Endothelial cell of umbilical vein (primary cell): ENCODE measurements at regions of chr17 and their contacts with region 1.

Region 1: GRCh38 chr17:34980681-34981537 is 597 bp downstream of the LIG3 start:
- DNase-seq: peak; percentile 80
- H3K4me3 ChIP-seq: peak overlapping the region; percentile 65 to 92 (median 89)
- H3K27ac ChIP-seq: peak overlapping the region; percentile 96
- H3K4me1 ChIP-seq: peaks cover 19% of the 10 kb centered on the region
- H3K27me3 ChIP-seq: no peaks in the 10 kb centered on the region
- CTCF ChIP-seq: peak in 1 of 2 donors; percentile 51
- POLR2A ChIP-seq: peak; percentile 80

Region 2: GRCh38 chr17:34961093-34961911 is 19.6 kb before region 1 on chr17 and contains the starts of genes CCT6B and ZNF830:
- CTCF ChIA-PET with region 1: interaction called, 7 read pairs
- POLR2A ChIA-PET with region 1: interaction called, 3 read pairs
- dilution Hi-C with region 1: no loop called
- intact Hi-C with region 1: loop called (anchors 1 kb)
- DNase-seq: peak; percentile 96
- H3K4me3 ChIP-seq: peak within 1 kb of the TSS; percentile 29 to 84 (median 80)
- H3K27ac ChIP-seq: peak within 1 kb of the TSS; percentile 76
- H3K4me1 ChIP-seq: peaks cover 18% of the 10 kb centered on the region
- H3K27me3 ChIP-seq: peaks cover under 1 to 1% of the 10 kb centered on the region in 2 experiments
- CTCF ChIP-seq: no peak
- POLR2A ChIP-seq: peak; percentile 74
- total RNA-seq, gene CCT6B: 0.78 and 1.6 TPM in 2 replicates
- total RNA-seq, gene ZNF830: 13.9 and 15.0 TPM in 2 replicates

Region 3: GRCh38 chr17:34990921-34991365 is 10.0 kb after region 1 on chr17:
- CTCF ChIA-PET with region 1: interaction called, 10 read pairs
- POLR2A ChIA-PET with region 1: interaction called, 5 read pairs
- dilution Hi-C with region 1: no loop called
- intact Hi-C with region 1: no loop called
- DNase-seq: no peak
- H3K4me3 ChIP-seq: no peak overlapping the region
- H3K27ac ChIP-seq: no peak overlapping the region
- H3K4me1 ChIP-seq: no peaks in the 10 kb centered on the region
- H3K27me3 ChIP-seq: no peaks in the 10 kb centered on the region
- CTCF ChIP-seq: no peak
- POLR2A ChIP-seq: no peak

Region 4: GRCh38 chr17:35088881-35089585 is 108.1 kb after region 1 on chr17:
- CTCF ChIA-PET with region 1: interaction called, 8 read pairs
- POLR2A ChIA-PET with region 1: no interaction called
- dilution Hi-C with region 1: no loop called
- intact Hi-C with region 1: loop called (anchors 1 kb)
- DNase-seq: peak; percentile 73
- H3K4me3 ChIP-seq: peak overlapping the region; percentile 65 to 81 (median 71)
- H3K27ac ChIP-seq: peak overlapping the region; percentile 72
- H3K4me1 ChIP-seq: peaks cover 22% of the 10 kb centered on the region
- H3K27me3 ChIP-seq: no peaks in the 10 kb centered on the region
- CTCF ChIP-seq: peak; percentile 76 to 77
- POLR2A ChIP-seq: peak; percentile 45